CD8-positive, alpha-beta T cell (primary cell): ENCODE measurements at regions of chr16 and their contacts with region 1.

Region 1: GRCh38 chr16:84726079-84726668 is 26.4 kb downstream of the USP10 start:
- DNase-seq: peak; percentile 74 to 92 (median 83)
- ATAC-seq: peak; percentile 76
- H3K4me3 ChIP-seq: no peak overlapping the region
- H3K4me3 Mint-ChIP-seq: peak overlapping the region; percentile 50
- H3K27ac ChIP-seq: no peak overlapping the region
- H3K27ac Mint-ChIP-seq: no peak overlapping the region
- H3K4me1 ChIP-seq: peaks cover 34% of the 10 kb centered on the region
- H3K4me1 Mint-ChIP-seq: peaks cover 64% of the 10 kb centered on the region
- H3K27me3 ChIP-seq: no peaks in the 10 kb centered on the region
- H3K27me3 Mint-ChIP-seq: no peaks in the 10 kb centered on the region
- CTCF ChIP-seq: peak; percentile 98

Region 2: GRCh38 chr16:84511180-84511824 is 214.9 kb before region 1 on chr16:
- CTCF ChIA-PET with region 1: interaction called, 50 read pairs
- POLR2A ChIA-PET with region 1: no interaction called
- intact Hi-C with region 1: loop called (anchors 1 to 2 kb)
- DNase-seq: peak; percentile 75 to 93 (median 84)
- ATAC-seq: peak; percentile 16
- H3K4me3 ChIP-seq: no peak overlapping the region
- H3K4me3 Mint-ChIP-seq: no peak overlapping the region
- H3K27ac ChIP-seq: no peak overlapping the region
- H3K27ac Mint-ChIP-seq: peak overlapping the region; percentile 60
- H3K4me1 ChIP-seq: peaks cover 85% of the 10 kb centered on the region
- H3K4me1 Mint-ChIP-seq: peaks cover 73% of the 10 kb centered on the region
- H3K27me3 ChIP-seq: peaks cover 0 to 2% of the 10 kb centered on the region in 2 experiments
- H3K27me3 Mint-ChIP-seq: no peaks in the 10 kb centered on the region
- CTCF ChIP-seq: peak; percentile 95

Region 3: DNA sequence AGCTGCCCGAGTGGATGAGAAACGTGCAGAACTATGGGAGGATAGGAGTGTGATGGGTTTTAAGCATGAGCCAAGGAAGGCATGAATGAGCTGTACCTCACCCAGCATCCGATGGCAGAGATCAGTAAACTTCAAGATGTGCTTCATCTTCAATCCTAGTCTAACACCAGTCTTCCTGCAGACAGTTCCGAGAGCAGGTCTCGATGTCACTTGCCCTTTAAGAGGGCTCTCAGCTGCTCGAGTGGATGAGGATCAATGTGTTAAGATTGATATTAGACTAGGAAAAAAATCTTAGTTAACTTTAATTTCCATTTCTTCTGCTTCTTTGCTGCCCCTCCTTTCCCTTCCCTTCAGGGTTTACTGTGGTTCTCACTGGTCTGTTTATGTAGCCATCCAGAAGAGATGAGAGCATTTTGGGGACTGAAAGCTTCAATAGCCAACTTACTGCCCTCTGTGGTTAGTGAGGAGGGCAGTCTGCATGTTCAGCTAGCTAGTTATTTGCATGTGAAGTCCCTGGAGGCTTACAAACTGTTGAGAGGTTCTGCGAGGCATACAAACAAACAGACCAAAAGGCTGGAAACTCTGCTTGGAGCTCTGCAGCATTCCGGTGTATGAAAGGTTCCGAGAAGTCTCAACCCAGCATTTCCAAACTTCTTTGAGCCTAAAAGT is 62.6 kb before region 1 on chr16:
- CTCF ChIA-PET with region 1: interaction called, 34 read pairs
- POLR2A ChIA-PET with region 1: no interaction called
- intact Hi-C with region 1: no loop called
- DNase-seq: no peak
- ATAC-seq: no peak
- H3K4me3 ChIP-seq: no peak overlapping the region
- H3K4me3 Mint-ChIP-seq: no peak overlapping the region
- H3K27ac ChIP-seq: no peak overlapping the region
- H3K27ac Mint-ChIP-seq: no peak overlapping the region
- H3K4me1 ChIP-seq: peaks cover 4% of the 10 kb centered on the region
- H3K4me1 Mint-ChIP-seq: peaks cover 18% of the 10 kb centered on the region
- H3K27me3 ChIP-seq: no peaks in the 10 kb centered on the region
- H3K27me3 Mint-ChIP-seq: no peaks in the 10 kb centered on the region
- CTCF ChIP-seq: no peak

Region 4: DNA sequence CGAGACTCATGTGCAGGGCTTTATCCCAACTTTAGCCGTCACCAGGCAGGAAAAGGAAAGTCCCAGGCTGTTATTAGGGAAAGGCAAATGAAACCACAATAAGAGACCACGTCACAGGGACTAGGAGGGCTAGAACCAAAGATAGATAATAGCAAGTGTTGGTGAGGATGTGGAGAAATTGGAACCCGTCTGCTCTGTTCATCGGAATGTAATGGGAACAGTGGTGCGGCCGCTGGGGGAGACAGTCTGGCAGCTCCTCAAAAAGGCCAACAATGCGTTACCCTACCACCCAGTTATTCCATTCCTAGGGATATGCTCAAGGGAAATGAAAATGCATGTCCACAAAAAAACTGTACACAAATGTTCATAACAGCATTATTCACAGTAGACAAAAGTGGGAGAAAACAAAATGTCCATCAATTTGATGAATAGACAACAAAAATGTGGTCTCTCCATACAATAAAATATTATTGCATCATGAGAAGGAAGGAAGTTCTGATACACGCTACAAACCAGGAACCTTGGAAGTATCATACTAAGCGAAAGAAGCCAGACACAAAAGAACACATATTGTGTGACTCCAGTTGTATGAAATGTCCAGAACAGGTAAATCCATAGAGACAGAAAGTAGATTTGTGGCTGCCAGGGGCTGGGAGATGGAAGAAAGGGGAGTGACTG is 45.9 kb before region 1 on chr16:
- CTCF ChIA-PET with region 1: interaction called, 11 read pairs
- POLR2A ChIA-PET with region 1: no interaction called
- intact Hi-C with region 1: no loop called
- DNase-seq: no peak
- ATAC-seq: no peak
- H3K4me3 ChIP-seq: no peak overlapping the region
- H3K4me3 Mint-ChIP-seq: no peak overlapping the region
- H3K27ac ChIP-seq: no peak overlapping the region
- H3K27ac Mint-ChIP-seq: no peak overlapping the region
- H3K4me1 ChIP-seq: no peaks in the 10 kb centered on the region
- H3K4me1 Mint-ChIP-seq: no peaks in the 10 kb centered on the region
- H3K27me3 ChIP-seq: no peaks in the 10 kb centered on the region
- H3K27me3 Mint-ChIP-seq: peaks cover 6% of the 10 kb centered on the region
- CTCF ChIP-seq: no peak

Region 5: DNA sequence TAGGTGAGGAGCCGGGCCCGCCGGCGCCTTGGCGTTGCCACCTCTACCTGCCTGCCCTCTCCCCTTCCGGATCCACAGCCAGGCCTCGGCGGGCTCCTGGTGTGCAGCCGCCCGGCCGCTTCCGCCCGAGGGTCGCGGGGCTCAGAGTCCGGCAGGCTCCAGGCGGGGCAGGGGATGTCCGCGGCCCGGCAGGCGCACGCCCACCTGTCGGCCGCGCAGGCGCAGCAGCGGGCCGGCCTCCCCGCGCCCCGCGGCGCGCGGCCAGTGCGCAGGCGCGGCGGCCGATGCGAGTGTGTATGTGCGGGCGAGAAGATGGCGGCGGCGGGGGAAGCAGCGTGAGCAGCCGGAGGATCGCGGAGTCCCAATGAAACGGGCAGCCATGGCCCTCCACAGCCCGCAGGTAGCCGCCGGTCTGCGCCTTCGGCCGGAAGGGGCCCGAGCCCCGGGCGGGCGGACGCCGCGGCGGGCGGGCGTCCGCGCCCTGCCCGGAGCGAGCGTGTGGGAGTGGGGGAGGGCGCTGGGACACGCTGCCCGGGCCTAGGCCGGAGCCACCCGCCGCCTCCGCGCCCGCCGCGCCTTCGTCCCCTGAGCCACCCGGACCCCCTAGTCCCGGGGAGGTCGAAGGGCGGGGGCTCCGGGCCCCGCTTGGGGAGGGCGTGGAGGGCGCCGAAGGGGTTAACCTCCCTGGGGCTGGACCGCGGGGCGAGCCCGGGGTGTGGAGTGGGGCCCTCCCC is 26.3 kb before region 1 on chr16 and contains the start of gene USP10:
- CTCF ChIA-PET with region 1: interaction called, 21 read pairs
- POLR2A ChIA-PET with region 1: no interaction called
- intact Hi-C with region 1: loop called (anchors 2 kb)
- DNase-seq: peak; percentile 69 to 93 (median 83)
- ATAC-seq: peak; percentile 82
- H3K4me3 ChIP-seq: peak within 1 kb of the TSS; percentile 78 to 86
- H3K4me3 Mint-ChIP-seq: peak within 1 kb of the TSS; percentile 98
- H3K27ac ChIP-seq: peak within 1 kb of the TSS; percentile 67 to 68
- H3K27ac Mint-ChIP-seq: peak within 1 kb of the TSS; percentile 97
- H3K4me1 ChIP-seq: peaks cover 32% of the 10 kb centered on the region
- H3K4me1 Mint-ChIP-seq: peaks cover 43% of the 10 kb centered on the region
- H3K27me3 ChIP-seq: no peaks in the 10 kb centered on the region
- H3K27me3 Mint-ChIP-seq: no peaks in the 10 kb centered on the region
- CTCF ChIP-seq: no peak
- total RNA-seq, gene USP10: 104 to 107 TPM

Region 6: GRCh38 chr16:84738255-84739038 is 12.3 kb after region 1 on chr16:
- CTCF ChIA-PET with region 1: interaction called, 135 read pairs
- POLR2A ChIA-PET with region 1: interaction called, 3 read pairs
- intact Hi-C with region 1: loop called in 1 of 2 experiments (anchors 1 kb)
- DNase-seq: peak; percentile 44 to 87 (median 78)
- ATAC-seq: peak; percentile 82
- H3K4me3 ChIP-seq: peak overlapping the region in 1 of 2 experiments; percentile 18
- H3K4me3 Mint-ChIP-seq: peak overlapping the region; percentile 53
- H3K27ac ChIP-seq: no peak overlapping the region
- H3K27ac Mint-ChIP-seq: peak overlapping the region; percentile 64
- H3K4me1 ChIP-seq: peaks cover 23% of the 10 kb centered on the region
- H3K4me1 Mint-ChIP-seq: peaks cover 48% of the 10 kb centered on the region
- H3K27me3 ChIP-seq: no peaks in the 10 kb centered on the region
- H3K27me3 Mint-ChIP-seq: no peaks in the 10 kb centered on the region
- CTCF ChIP-seq: peak; percentile 84

Region 7: DNA sequence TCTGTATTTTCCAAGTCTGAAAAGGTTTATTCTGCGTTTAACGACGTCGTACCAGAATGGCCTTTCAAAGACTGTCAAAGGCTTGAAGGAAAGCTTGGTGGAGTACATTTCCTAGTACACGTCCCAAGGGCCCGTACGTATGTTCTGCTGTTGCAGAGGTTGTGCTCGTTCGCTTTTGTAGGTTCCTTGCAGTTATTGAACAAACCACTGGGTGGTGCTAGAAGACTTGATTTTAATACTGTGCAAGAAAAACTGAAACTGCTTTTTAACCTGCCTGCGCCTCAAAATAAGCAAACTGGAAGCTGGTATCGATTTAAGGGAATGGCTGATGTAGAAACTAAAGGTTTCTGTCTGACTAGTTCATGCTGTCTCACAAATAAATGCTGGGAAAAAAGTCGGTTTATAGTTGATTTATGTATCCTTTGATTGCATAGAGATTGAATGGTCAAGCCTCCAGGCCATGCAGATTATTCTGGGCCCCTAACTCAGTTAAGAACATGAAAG is 28.2 kb after region 1 on chr16:
- CTCF ChIA-PET with region 1: interaction called, 13 read pairs
- POLR2A ChIA-PET with region 1: no interaction called
- intact Hi-C with region 1: no loop called
- DNase-seq: peak; percentile 42 to 87 (median 63)
- ATAC-seq: peak; percentile 72
- H3K4me3 ChIP-seq: no peak overlapping the region
- H3K4me3 Mint-ChIP-seq: peak overlapping the region; percentile 53
- H3K27ac ChIP-seq: peak overlapping the region in 1 of 2 experiments; percentile 2
- H3K27ac Mint-ChIP-seq: peak overlapping the region; percentile 45
- H3K4me1 ChIP-seq: peaks cover 45% of the 10 kb centered on the region
- H3K4me1 Mint-ChIP-seq: peaks cover 81% of the 10 kb centered on the region
- H3K27me3 ChIP-seq: no peaks in the 10 kb centered on the region
- H3K27me3 Mint-ChIP-seq: no peaks in the 10 kb centered on the region
- CTCF ChIP-seq: peak; percentile 93

Region 8: DNA sequence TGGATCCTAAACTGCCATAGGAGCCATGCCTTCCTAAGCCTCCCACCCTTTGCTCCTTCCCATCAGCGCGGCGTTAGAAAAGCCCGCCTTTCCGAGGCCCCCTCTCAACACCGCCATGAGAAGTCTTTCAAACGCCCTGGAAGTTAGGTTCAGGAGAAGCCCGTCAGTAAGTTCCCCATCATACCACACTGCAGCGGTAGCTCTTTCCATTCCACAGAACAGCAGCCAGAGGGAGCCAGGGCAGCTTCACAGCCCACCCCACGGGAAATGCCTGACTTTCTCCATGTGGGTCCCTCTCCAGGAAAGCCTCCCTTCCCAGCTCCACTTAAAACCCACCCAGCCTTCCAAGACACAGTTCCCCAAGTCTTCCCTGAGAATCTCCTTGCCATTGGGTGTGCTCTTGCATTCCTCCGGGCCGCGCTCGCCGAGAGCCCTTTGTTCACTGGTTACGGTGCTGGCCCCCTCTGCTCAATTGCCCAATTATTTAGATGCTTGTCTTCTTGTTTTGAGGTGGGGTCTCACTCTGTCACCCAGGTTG is 330.1 kb after region 1 on chr16:
- CTCF ChIA-PET with region 1: no interaction called
- POLR2A ChIA-PET with region 1: no interaction called
- intact Hi-C with region 1: no loop called
- DNase-seq: peak in 3 of 9 experiments; percentile 28 to 52 (median 52)
- ATAC-seq: no peak
- H3K4me3 ChIP-seq: peak overlapping the region; percentile 30 to 33
- H3K4me3 Mint-ChIP-seq: peak overlapping the region; percentile 69
- H3K27ac ChIP-seq: peak overlapping the region; percentile 52 to 82
- H3K27ac Mint-ChIP-seq: peak overlapping the region; percentile 94
- H3K4me1 ChIP-seq: peaks cover 42% of the 10 kb centered on the region
- H3K4me1 Mint-ChIP-seq: peaks cover 67% of the 10 kb centered on the region
- H3K27me3 ChIP-seq: peaks cover 0 to 2% of the 10 kb centered on the region in 2 experiments
- H3K27me3 Mint-ChIP-seq: no peaks in the 10 kb centered on the region
- CTCF ChIP-seq: no peak